MCF 10A (cell line): ENCODE measurements at regions of chr1 and their contacts with region 1.

Region 1: DNA sequence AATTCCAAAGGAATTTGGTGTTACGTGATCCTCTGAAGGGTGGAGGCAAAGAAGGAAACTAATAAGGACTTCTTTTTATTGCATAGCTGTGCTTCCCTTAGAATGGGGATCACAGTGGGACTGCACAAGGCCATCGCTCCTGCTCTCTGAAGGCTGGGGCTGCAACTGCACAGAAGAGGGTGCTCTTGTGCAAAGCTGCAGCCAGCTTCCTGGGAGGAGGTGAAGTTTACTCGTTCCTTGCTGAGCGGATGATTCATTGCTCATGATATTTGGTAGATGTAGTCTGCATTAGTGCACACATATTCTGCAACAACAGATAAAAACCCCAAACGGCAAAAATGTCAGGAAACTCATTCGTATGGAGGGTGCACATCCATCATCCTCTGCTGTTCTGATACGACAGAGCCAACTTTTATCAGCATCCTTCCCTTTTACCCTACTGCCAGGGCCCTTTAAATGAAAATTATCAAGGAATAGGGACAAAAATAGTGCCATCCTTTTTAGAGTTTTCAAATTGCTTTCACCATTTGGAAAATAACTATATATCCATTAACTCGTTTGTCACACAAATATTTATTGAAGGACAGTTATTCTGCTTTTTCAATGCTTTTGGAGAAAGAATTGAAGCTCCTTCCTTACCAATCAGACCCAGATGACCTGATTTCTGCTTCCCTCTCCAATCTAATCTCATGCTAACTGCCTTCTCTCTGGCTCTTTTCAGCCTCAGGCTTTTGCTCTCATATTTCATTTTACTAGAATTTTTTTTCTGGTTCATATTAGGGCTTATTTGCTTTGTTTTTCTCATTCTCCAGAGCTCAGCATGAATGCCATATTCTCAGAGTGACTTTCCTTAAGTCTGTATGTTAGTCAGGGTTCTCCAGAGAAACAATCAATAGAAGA is 263.6 kb downstream of the DUSP10 start:
- DNase-seq: peak; percentile 96
- H3K4me3 Mint-ChIP-seq: no peak overlapping the region
- H3K27ac Mint-ChIP-seq: no peak overlapping the region
- H3K4me1 Mint-ChIP-seq: no peaks in the 10 kb centered on the region
- H3K27me3 Mint-ChIP-seq: no peaks in the 10 kb centered on the region
- CTCF ChIP-seq: peak; percentile 99

Region 2: GRCh38 chr1:220129479-220130210 is 1348.7 kb before region 1 on chr1:
- CTCF ChIA-PET with region 1: no interaction called
- POLR2A ChIA-PET with region 1: no interaction called
- intact Hi-C with region 1: no loop called
- DNase-seq: no peak
- H3K4me3 Mint-ChIP-seq: no peak overlapping the region
- H3K27ac Mint-ChIP-seq: peak overlapping the region; percentile 3
- H3K4me1 Mint-ChIP-seq: peaks cover 3% of the 10 kb centered on the region
- H3K27me3 Mint-ChIP-seq: no peaks in the 10 kb centered on the region
- CTCF ChIP-seq: no peak

Region 3: GRCh38 chr1:221517961-221518360 is 39.7 kb after region 1 on chr1:
- CTCF ChIA-PET with region 1: interaction called, 15 read pairs
- POLR2A ChIA-PET with region 1: no interaction called
- intact Hi-C with region 1: no loop called
- DNase-seq: peak; percentile 96
- H3K4me3 Mint-ChIP-seq: no peak overlapping the region
- H3K27ac Mint-ChIP-seq: peak overlapping the region; percentile 49
- H3K4me1 Mint-ChIP-seq: peaks cover 7% of the 10 kb centered on the region
- H3K27me3 Mint-ChIP-seq: no peaks in the 10 kb centered on the region
- CTCF ChIP-seq: no peak

Region 4: GRCh38 chr1:221576268-221576667 is 98.0 kb after region 1 on chr1:
- CTCF ChIA-PET with region 1: no interaction called
- POLR2A ChIA-PET with region 1: no interaction called
- intact Hi-C with region 1: no loop called
- DNase-seq: no peak
- H3K4me3 Mint-ChIP-seq: no peak overlapping the region
- H3K27ac Mint-ChIP-seq: no peak overlapping the region
- H3K4me1 Mint-ChIP-seq: no peaks in the 10 kb centered on the region
- H3K27me3 Mint-ChIP-seq: no peaks in the 10 kb centered on the region
- CTCF ChIP-seq: no peak

Region 5: GRCh38 chr1:221725735-221726672 is 247.7 kb after region 1 on chr1:
- CTCF ChIA-PET with region 1: interaction called, 8 read pairs
- POLR2A ChIA-PET with region 1: interaction called, 4 read pairs
- intact Hi-C with region 1: loop called (anchors 5 kb)
- DNase-seq: peak; percentile 67
- H3K4me3 Mint-ChIP-seq: peak overlapping the region; percentile 47
- H3K27ac Mint-ChIP-seq: peak overlapping the region; percentile 97
- H3K4me1 Mint-ChIP-seq: peaks cover 53% of the 10 kb centered on the region
- H3K27me3 Mint-ChIP-seq: no peaks in the 10 kb centered on the region
- CTCF ChIP-seq: no peak

Region 6: GRCh38 chr1:221994274-221994698 is 516.0 kb after region 1 on chr1:
- CTCF ChIA-PET with region 1: interaction called, 17 read pairs
- POLR2A ChIA-PET with region 1: interaction called, 3 read pairs
- intact Hi-C with region 1: no loop called
- DNase-seq: no peak
- H3K4me3 Mint-ChIP-seq: no peak overlapping the region
- H3K27ac Mint-ChIP-seq: no peak overlapping the region
- H3K4me1 Mint-ChIP-seq: peaks cover 44% of the 10 kb centered on the region
- H3K27me3 Mint-ChIP-seq: no peaks in the 10 kb centered on the region
- CTCF ChIP-seq: no peak

Region 7: GRCh38 chr1:222018041-222018440 is 539.7 kb after region 1 on chr1:
- CTCF ChIA-PET with region 1: interaction called, 11 read pairs
- POLR2A ChIA-PET with region 1: no interaction called
- intact Hi-C with region 1: no loop called
- DNase-seq: no peak
- H3K4me3 Mint-ChIP-seq: no peak overlapping the region
- H3K27ac Mint-ChIP-seq: no peak overlapping the region
- H3K4me1 Mint-ChIP-seq: no peaks in the 10 kb centered on the region
- H3K27me3 Mint-ChIP-seq: no peaks in the 10 kb centered on the region
- CTCF ChIP-seq: no peak

Region 8: GRCh38 chr1:222370081-222370912 is 892.0 kb after region 1 on chr1:
- CTCF ChIA-PET with region 1: no interaction called
- POLR2A ChIA-PET with region 1: no interaction called
- intact Hi-C with region 1: no loop called
- DNase-seq: peak; percentile 78
- H3K4me3 Mint-ChIP-seq: no peak overlapping the region
- H3K27ac Mint-ChIP-seq: peak overlapping the region; percentile 94
- H3K4me1 Mint-ChIP-seq: peaks cover 20% of the 10 kb centered on the region
- H3K27me3 Mint-ChIP-seq: no peaks in the 10 kb centered on the region
- CTCF ChIP-seq: no peak